ENCODE measurements at regions of chr10 and their contacts with region 1.

Region 1: GRCh38 chr10:31620226-31621151 is 301.5 kb downstream of the ZEB1 start:
- DNase-seq: peak; percentile 80
- ATAC-seq: peak; percentile 68

Region 2: DNA sequence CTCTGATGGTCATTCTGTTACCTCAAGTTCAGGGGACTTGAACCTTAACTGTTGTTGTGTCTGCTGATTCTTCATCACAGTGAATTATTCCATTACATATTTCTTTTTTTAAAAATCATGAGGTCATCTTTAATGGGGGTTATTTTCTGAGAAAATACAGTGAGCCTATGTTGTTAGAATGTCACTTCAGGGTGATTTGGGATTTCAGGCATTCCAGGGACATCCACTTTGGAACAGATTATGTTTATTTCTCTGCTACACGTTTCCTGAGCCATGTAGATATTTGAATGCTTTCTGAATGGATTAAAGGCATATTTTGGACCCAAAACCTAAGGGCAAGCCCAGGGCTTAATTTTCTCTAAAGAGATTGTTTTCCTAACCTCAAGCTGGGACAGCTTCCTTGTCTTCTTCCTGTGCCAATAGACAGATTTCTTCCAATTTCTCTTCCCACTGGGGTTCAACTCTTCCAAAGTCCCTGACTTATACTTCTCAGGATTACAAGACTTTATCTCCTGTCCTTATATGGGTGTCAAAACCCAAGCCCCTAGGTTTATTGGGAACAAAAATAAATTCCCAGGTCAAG is 36.5 kb after region 1 on chr10:
- intact Hi-C with region 1: loop called (anchors 5 kb)
- DNase-seq: no peak
- ATAC-seq: peak; percentile 90

Measured in Right ventricle myocardium inferior (tissue), 1 donor.